ENCODE measurements at regions of chr11 and their contacts with region 1.

Region 1: DNA sequence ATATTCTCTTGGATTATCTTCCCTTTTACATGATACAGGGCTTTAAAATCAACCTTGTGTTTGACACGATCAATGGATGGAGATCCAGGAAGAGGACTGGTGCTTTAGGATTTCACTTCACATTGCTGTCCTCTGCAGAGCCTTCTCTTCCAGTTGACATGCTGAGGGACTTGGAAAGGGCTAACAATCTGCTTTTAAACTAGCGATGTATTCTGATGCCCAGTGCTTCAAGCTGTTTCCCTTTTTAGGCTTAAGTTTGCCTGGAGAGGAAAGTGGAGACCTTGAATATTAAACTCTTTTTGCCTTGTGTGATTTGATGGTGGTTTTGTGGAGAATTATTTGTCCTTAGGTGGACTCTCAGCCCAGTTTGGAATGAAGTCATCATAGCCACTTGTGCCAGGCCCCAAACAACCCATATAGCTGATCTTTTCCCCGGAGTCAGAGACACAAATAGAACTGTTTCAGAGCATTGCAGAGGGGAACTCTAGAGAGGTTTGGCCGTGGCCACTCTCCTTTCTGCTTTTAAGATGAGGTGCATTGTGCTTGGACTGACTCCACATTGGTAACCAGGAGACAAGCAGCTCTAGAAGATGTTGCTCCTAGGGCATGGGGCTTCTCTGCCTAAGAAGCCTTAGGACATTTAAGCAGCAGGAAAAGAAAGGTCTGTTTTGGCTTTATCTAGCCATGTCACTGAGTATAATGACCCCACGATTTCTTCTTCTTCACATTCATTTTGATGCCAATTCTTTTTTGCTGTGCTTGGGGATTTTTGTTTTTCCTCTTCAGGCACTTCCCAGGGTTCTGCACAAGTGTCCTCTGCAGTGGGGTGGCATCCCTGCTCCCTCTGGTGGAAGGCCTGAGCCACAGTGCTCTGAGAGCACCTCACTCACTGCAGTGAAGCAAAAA is 152.8 kb downstream of the NCAM1 start:
- ATAC-seq: peak; percentile 81 to 99 (median 92)
- H3K4me3 ChIP-seq: no peak overlapping the region
- H3K27ac ChIP-seq: no peak overlapping the region
- H3K4me1 ChIP-seq: peaks cover 26 to 55% of the 10 kb centered on the region in 2 donors

Region 2: GRCh38 chr11:112448168-112448567 is 665.9 kb before region 1 on chr11:
- in situ Hi-C with region 1: no loop called
- ATAC-seq: peak in 5 of 8 experiments; percentile 36 to 79 (median 68)
- H3K4me3 ChIP-seq: no peak overlapping the region
- H3K27ac ChIP-seq: no peak overlapping the region
- H3K4me1 ChIP-seq: no peaks in the 10 kb centered on the region

Region 3: GRCh38 chr11:112588252-112588694 is 525.8 kb before region 1 on chr11:
- in situ Hi-C with region 1: loop called in 1 of 9 experiments (anchors 25 kb)
- ATAC-seq: peak; percentile 87 to 98 (median 95)
- H3K4me3 ChIP-seq: no peak overlapping the region
- H3K27ac ChIP-seq: peak overlapping the region; percentile 31 to 47
- H3K4me1 ChIP-seq: peaks cover 37 to 43% of the 10 kb centered on the region in 2 donors

Region 4: DNA sequence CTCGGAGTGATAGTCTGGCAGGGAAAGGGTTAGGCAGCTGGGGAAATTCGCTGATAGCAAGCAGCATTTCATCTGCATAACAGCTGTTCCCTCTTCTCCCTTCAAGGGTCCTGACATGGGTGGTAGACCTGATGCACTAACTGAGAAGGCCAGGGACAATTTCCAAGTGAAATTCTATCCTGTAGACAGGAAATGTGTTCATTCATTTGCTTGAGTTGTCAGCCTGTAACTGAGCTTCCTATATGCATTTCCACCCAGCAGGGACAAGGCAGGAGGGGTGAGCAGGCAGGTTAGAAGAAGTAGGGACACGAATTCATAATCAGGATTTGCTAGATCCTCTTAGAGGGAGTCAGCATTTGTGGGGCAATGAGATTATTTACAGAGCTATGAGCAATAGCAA is 307.2 kb before region 1 on chr11:
- in situ Hi-C with region 1: loop called in 2 of 9 experiments (anchors 10 to 25 kb)
- ATAC-seq: peak; percentile 22 to 80 (median 69)
- H3K4me3 ChIP-seq: no peak overlapping the region
- H3K27ac ChIP-seq: peak overlapping the region; percentile 1 to 24
- H3K4me1 ChIP-seq: peaks cover 34 to 41% of the 10 kb centered on the region in 2 donors

Region 5: DNA sequence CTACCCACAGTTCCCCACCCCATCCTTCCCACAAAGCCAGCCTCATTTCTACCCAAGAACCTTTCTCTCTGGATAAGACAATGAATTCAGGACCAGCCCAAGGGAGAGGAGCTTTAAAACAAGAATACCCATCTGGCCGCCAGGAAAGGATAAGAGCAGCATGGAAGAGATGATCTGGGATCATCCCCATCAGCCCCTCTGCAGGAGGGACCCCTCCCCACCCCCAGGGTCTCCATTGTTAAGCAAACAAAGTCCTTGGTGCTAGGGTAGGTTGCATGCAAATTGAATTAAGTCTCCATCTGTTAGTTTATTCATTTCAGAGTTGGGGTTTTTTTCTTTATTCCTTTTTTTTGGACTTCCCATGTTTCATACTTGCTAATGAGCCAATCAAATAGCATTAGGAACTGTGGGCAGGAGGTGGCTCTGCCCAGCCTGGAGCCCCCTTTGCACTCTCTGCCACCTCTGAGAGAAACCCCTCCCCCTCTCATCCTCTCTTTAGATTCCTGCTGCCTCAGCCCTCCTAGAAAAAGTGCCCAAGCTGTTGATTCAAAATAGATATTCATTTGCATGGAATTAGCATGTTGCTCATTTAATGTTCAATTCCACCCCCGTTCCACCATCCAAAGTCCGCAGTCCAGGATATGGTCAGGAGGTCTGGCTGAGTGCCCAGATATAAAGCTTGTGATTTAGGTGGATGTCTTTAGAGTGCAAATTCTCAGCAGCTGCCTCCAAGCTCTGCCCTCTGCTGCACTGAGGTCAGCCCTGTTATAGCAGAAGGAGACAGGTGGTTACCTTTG is 291.4 kb before region 1 on chr11:
- in situ Hi-C with region 1: loop called in 1 of 9 experiments (anchors 25 kb)
- ATAC-seq: peak; percentile 70 to 96 (median 87)
- H3K4me3 ChIP-seq: no peak overlapping the region
- H3K27ac ChIP-seq: peak overlapping the region; percentile 36 to 56
- H3K4me1 ChIP-seq: peaks cover 16 to 20% of the 10 kb centered on the region in 2 donors

Measured in motor neuron (in vitro differentiated cells).